ENCODE measurements at regions of chr1 and their contacts with region 1.

Region 1: DNA sequence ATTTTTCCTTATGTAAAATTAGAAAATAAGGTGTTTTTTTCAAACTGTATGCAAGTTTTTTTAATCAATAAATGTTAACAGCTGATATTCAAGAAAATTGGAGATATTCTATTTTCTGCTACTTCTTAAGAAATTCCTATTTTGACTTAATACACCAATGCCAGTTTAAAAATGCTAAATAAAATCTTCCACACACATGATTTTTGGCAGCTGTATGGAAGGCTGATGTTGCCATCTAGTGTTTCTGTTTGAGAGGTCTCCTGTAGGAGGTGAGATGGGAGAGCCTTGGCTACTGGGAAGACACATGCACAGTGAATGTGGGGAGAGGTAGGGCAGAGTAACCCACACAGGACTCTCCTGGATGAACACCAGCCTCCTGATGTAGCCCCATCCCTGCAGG is 29.2 kb upstream of the OR2B11 start:
- DNase-seq: no peak
- ATAC-seq: no peak
- H3K4me3 ChIP-seq: no peak overlapping the region
- H3K27ac ChIP-seq: no peak overlapping the region
- H3K4me1 ChIP-seq: no peaks in the 10 kb centered on the region
- H3K27me3 ChIP-seq: no peaks in the 10 kb centered on the region
- CTCF ChIP-seq: peak; percentile 36

Region 2: GRCh38 chr1:247043406-247043805 is 443.7 kb before region 1 on chr1:
- intact Hi-C with region 1: loop called in 1 of 2 experiments (anchors 5 kb)
- DNase-seq: no peak
- ATAC-seq: no peak
- H3K4me3 ChIP-seq: no peak overlapping the region
- H3K27ac ChIP-seq: no peak overlapping the region
- H3K4me1 ChIP-seq: no peaks in the 10 kb centered on the region
- H3K27me3 ChIP-seq: no peaks in the 10 kb centered on the region
- CTCF ChIP-seq: peak; percentile 40

Region 3: DNA sequence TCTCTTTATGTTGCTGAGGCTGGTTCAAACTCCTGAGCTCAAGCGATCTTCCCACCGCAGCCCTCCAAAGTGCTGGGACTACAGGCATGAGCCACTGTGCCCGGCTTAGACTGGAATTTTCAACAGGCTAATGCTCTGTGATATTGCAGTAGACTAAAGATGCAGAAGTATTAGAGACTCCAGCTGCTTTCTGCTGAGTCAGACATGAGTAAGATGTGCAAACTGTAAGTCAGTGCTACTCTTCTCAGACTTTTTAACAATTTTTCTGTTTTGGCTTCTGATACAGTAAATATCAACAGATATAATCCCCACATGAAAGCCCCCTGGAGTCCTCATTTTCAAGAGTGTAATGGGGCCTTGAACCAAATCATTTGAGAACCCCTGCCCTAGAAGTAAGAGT is 100.4 kb before region 1 on chr1:
- intact Hi-C with region 1: loop called in 1 of 2 experiments (anchors 10 kb)
- DNase-seq: no peak
- ATAC-seq: no peak
- H3K4me3 ChIP-seq: no peak overlapping the region
- H3K27ac ChIP-seq: no peak overlapping the region
- H3K4me1 ChIP-seq: no peaks in the 10 kb centered on the region
- H3K27me3 ChIP-seq: no peaks in the 10 kb centered on the region
- CTCF ChIP-seq: no peak

Region 4: GRCh38 chr1:247407180-247407616 is 79.9 kb before region 1 on chr1:
- intact Hi-C with region 1: no loop called
- DNase-seq: peak in 1 of 2 donors; percentile 31
- ATAC-seq: peak in 2 of 4 donors; percentile 17 to 51
- H3K4me3 ChIP-seq: no peak overlapping the region
- H3K27ac ChIP-seq: no peak overlapping the region
- H3K4me1 ChIP-seq: no peaks in the 10 kb centered on the region
- H3K27me3 ChIP-seq: no peaks in the 10 kb centered on the region
- CTCF ChIP-seq: no peak

Region 5: GRCh38 chr1:247435030-247435758 is 51.9 kb before region 1 on chr1:
- intact Hi-C with region 1: no loop called
- DNase-seq: no peak
- ATAC-seq: no peak
- H3K4me3 ChIP-seq: no peak overlapping the region
- H3K27ac ChIP-seq: no peak overlapping the region
- H3K4me1 ChIP-seq: no peaks in the 10 kb centered on the region
- H3K27me3 ChIP-seq: peaks cover 0 to 3% (median 0%) of the 10 kb centered on the region in 3 donors
- CTCF ChIP-seq: no peak

Region 6: GRCh38 chr1:247531923-247532322 is 44.9 kb after region 1 on chr1:
- intact Hi-C with region 1: no loop called
- DNase-seq: no peak
- ATAC-seq: no peak
- H3K4me3 ChIP-seq: no peak overlapping the region
- H3K27ac ChIP-seq: no peak overlapping the region
- H3K4me1 ChIP-seq: no peaks in the 10 kb centered on the region
- H3K27me3 ChIP-seq: no peaks in the 10 kb centered on the region
- CTCF ChIP-seq: no peak

Region 7: GRCh38 chr1:247578946-247579475 is 92.0 kb after region 1 on chr1:
- intact Hi-C with region 1: no loop called
- DNase-seq: no peak
- ATAC-seq: no peak
- H3K4me3 ChIP-seq: no peak overlapping the region
- H3K27ac ChIP-seq: no peak overlapping the region
- H3K4me1 ChIP-seq: no peaks in the 10 kb centered on the region
- H3K27me3 ChIP-seq: no peaks in the 10 kb centered on the region
- CTCF ChIP-seq: no peak

Measured in psoas muscle (tissue), 8 donors.